Activated T-helper 2 cell treated with anti-CD3 and anti-CD28 coated beads, Interferon-gamma antibody, Interleukin-2, Interleukin-4, amounts not matched to agents 10 μg/mL and 5 μg/mL and 100 μg/mL, durations not matched to agents 14 hours and 24 hours and 36 hours (primary cell): ENCODE measurements at regions of chr9 and their contacts with region 1.

Region 1: DNA sequence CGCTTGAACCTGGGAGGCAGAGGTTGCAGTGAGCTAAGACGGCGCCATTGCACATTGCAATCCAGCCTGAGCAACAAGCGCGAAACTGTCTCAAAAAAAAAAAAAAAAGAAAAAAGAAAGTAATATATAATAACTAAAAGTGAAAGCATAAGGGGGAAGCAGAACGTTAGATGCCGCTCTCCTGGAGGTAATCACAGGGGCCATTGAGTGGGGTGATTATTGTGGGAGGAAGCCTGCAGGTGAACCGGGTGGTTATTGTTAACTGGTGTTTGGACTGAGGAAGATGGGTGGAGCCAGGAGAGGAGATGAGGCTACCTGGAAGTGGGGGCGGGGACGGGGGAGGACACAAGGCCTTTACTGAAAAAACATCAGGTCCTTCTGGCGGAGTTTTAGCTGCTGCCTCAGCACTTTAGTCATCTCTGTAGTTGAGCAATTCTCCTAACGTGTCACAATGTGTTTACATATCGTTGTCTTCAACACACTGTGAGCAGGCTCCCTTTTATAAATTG is 5.3 kb upstream of the TJP2 start:
- DNase-seq: peak; percentile 61
- H3K4me3 Mint-ChIP-seq: peak overlapping the region; percentile 61
- H3K27ac Mint-ChIP-seq: peak overlapping the region; percentile 83
- H3K4me1 Mint-ChIP-seq: peaks cover 34% of the 10 kb centered on the region
- H3K27me3 Mint-ChIP-seq: peaks cover 10% of the 10 kb centered on the region

Region 2: DNA sequence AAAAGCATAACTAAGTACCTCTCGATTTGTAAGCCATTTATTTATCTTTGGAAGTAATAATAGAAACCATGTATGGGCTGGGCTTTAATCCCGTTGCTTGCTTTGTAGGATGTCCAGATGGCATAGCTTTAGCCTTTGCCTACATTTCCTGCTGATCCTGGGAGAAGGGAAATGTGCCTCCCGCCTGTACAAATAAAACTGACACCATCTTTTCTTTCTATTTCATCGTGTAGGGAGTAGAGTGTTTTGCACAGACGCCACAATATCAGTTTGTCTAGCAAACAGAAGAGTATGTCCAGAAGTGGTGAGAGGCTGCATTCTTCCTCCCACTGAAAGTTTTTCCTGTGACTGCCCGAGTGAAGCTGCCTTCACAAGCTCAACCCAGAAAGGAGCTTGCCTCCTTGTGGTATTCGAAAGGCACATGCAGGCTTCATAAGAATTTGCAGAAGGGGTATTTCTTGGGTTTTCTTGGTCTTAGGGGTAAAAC is 19.4 kb before region 1 on chr9:
- intact Hi-C with region 1: no loop called
- DNase-seq: no peak
- H3K4me3 Mint-ChIP-seq: no peak overlapping the region
- H3K27ac Mint-ChIP-seq: no peak overlapping the region
- H3K4me1 Mint-ChIP-seq: no peaks in the 10 kb centered on the region
- H3K27me3 Mint-ChIP-seq: peaks cover 3% of the 10 kb centered on the region

Region 3: GRCh38 chr9:69180670-69181069 is 11.9 kb after region 1 on chr9:
- intact Hi-C with region 1: loop called (anchors 2 kb)
- DNase-seq: peak; percentile 70
- H3K4me3 Mint-ChIP-seq: peak overlapping the region; percentile 21
- H3K27ac Mint-ChIP-seq: peak overlapping the region; percentile 73
- H3K4me1 Mint-ChIP-seq: peaks cover 59% of the 10 kb centered on the region
- H3K27me3 Mint-ChIP-seq: no peaks in the 10 kb centered on the region